Left lung (tissue), 14 donors: ENCODE measurements at regions of chr20 and their contacts with region 1.

Region 1: DNA sequence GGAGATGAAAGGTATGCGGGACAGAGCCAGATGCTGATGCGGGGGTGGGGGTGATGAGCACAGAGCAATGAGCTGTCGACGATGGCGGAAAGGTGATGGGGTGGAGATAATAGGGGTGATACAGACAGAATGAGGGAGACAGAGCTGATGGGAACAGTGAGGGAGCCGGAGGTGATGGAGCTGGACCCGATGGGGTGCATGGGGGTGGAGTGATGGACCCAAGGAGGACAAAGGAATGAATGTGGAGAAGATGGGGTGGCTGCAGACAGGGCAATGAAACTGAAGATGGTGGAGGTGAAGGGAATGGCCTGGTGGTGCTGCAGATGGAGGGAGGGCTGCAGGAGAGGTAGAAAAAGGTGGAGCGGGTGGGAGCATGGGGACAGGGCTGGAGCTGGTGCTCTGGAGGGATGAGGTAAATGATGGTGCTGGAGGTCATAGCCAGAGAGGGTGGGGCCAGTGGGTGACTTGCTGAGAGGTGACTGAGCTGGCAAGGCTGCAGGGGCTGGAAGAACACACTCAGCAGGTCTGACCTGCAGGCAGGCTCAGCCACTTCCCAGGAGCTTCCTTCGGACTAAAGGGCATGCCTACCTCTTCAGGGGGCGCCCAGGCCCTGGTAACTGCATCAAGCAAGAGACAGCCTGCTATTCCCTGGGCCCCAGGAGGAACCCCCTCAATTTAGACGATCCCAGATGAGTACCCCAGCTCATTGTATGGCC is 6.0 kb upstream of the FOXS1 start:
- DNase-seq: no peak
- ATAC-seq: no peak
- H3K4me3 ChIP-seq: no peak overlapping the region
- H3K27ac ChIP-seq: no peak overlapping the region
- H3K4me1 ChIP-seq: peaks cover 0 to 5% of the 10 kb centered on the region in 2 donors
- H3K27me3 ChIP-seq: peaks cover 7 to 58% of the 10 kb centered on the region in 2 donors
- CTCF ChIP-seq: no peak

Region 2: GRCh38 chr20:31951530-31952453 is 100.4 kb after region 1 on chr20 and contains the start of gene PDRG1:
- intact Hi-C with region 1: loop called in 1 of 2 experiments (anchors 5 kb)
- DNase-seq: peak; percentile 94 to 99 (median 96)
- ATAC-seq: peak; percentile 100
- H3K4me3 ChIP-seq: peak within 1 kb of the TSS; percentile 94 to 100
- H3K27ac ChIP-seq: peak within 1 kb of the TSS; percentile 55 to 73
- H3K4me1 ChIP-seq: peaks cover 8 to 19% of the 10 kb centered on the region in 2 donors
- H3K27me3 ChIP-seq: peaks cover 0 to 21% of the 10 kb centered on the region in 2 donors
- CTCF ChIP-seq: peak; percentile 90 to 92
- polyA plus RNA-seq, gene PDRG1: 15.2 to 19.1 (median 17.0) TPM

Region 3: DNA sequence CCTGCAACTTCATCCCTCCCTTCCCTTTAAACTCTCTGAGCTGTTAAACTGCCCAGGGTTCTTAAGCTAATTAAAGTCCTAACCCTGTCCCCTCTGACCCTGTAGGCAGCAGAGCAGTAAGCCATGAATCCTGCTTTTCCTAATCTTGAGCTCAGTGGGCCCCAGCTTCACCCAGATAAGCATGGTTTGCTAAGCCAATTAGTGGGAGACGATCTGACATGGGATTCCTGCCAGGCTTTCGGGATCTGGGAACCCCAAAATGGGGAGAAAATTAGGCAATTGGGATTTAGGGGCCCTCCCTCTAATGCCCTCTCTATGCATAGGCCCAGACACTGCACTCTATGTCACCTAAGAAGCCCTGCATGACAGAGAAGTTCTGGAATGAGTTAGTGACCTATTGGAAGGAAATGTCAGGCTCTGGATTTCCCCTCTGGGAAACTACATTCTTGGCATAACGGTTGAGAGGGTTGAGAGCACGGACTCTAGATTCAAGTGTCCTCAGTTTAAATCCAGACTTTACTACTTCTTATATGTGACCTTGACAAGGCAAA is 121.1 kb after region 1 on chr20:
- intact Hi-C with region 1: no loop called
- DNase-seq: no peak
- ATAC-seq: peak; percentile 19
- H3K4me3 ChIP-seq: no peak overlapping the region
- H3K27ac ChIP-seq: no peak overlapping the region
- H3K4me1 ChIP-seq: peaks cover 0 to 6% of the 10 kb centered on the region in 2 donors
- H3K27me3 ChIP-seq: peaks cover 3 to 43% of the 10 kb centered on the region in 2 donors
- CTCF ChIP-seq: no peak

Region 4: GRCh38 chr20:32028647-32029372 is 177.4 kb after region 1 on chr20:
- intact Hi-C with region 1: loop called in 1 of 2 experiments (anchors 5 kb)
- DNase-seq: no peak
- ATAC-seq: no peak
- H3K4me3 ChIP-seq: no peak overlapping the region
- H3K27ac ChIP-seq: no peak overlapping the region
- H3K4me1 ChIP-seq: peaks cover 5 to 33% of the 10 kb centered on the region in 2 donors
- H3K27me3 ChIP-seq: peaks cover 0 to 24% of the 10 kb centered on the region in 2 donors
- CTCF ChIP-seq: no peak